ENCODE measurements at regions of chr5 and their contacts with region 1.

Region 1: DNA sequence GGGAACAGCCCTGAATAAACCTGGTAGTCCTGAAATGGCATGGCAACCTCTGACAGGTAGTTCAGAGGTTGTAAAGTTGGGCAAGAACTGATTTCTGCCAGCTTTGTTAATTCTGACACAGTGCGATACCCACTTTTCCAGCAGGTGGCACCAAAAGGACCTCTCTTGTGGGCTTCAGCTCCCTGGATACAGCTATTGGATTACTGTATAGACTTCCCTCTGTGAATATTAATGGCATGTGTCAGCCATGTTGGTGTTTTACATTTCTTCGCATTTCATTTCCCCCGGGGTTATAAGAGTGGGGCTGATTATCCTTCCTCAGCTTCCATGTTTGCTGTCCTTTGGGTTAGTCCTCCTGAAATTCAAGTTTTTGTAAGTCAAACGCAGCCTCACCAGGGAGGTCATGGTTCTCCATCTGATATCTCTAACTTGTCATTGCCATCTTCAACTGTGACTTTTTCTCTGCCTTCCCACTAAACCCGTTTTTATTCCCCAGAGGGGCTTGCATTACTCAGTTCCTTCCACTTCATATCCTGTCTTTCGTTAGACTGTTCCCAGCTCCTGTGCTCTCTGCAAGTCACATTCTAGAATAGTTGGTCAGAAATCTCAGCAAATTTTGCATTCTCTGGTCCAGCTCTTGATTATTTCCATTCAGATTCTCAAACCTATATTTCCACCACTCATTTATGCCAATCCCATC is 135.6 kb downstream of the LIFR start:
- DNase-seq: peak; percentile 73
- H3K4me3 ChIP-seq: peak overlapping the region in 1 of 3 experiments; percentile 32
- H3K27ac ChIP-seq: peak overlapping the region; percentile 39
- H3K4me1 ChIP-seq: peaks cover 11% of the 10 kb centered on the region
- H3K27me3 ChIP-seq: no peaks in the 10 kb centered on the region
- CTCF ChIP-seq: peak; percentile 74 to 81
- POLR2A ChIP-seq: no peak

Region 2: DNA sequence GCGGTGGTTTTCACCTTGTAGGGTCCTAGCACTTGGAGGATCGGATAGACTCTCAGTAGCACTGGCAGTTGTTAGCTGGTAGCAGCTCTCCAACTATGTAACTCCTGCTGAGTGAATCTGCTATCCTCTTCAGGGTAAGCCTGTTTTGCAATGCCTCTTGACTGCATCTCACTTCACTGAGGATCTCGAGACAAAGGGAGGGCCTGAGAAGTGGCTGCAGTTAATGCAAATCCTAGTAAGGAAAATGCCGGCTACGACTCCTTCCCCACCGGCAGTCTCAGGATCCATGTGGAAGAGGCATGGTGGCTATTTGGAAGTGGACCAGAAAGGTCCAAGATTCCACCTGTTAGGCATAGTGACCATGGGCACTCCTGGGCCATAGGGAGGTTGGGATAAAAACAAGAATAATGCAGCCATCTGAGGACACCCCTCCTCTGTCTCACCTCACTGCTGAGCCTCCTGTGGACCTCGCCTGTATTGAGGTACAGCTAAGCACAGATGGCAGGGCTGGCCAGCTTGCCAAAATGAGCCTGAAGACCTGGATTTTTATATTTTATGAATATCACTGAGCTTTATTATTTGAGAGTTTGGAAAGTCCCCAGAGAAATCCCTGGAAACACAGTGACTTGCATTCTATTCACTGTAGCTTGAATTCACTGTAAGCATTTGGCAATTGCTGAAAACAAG is 10.4 kb before region 1 on chr5:
- CTCF ChIA-PET with region 1: interaction called, 29 read pairs
- POLR2A ChIA-PET with region 1: no interaction called
- dilution Hi-C with region 1: no loop called
- intact Hi-C with region 1: no loop called
- DNase-seq: no peak
- H3K4me3 ChIP-seq: no peak overlapping the region
- H3K27ac ChIP-seq: no peak overlapping the region
- H3K4me1 ChIP-seq: no peaks in the 10 kb centered on the region
- H3K27me3 ChIP-seq: peaks cover 0 to 3% of the 10 kb centered on the region in 2 experiments
- CTCF ChIP-seq: no peak
- POLR2A ChIP-seq: no peak

Region 3: GRCh38 chr5:38463634-38464521 is 43.0 kb after region 1 on chr5:
- CTCF ChIA-PET with region 1: interaction called, 18 read pairs
- POLR2A ChIA-PET with region 1: no interaction called
- dilution Hi-C with region 1: no loop called
- intact Hi-C with region 1: loop called (anchors 1 kb)
- DNase-seq: peak; percentile 89
- H3K4me3 ChIP-seq: no peak overlapping the region
- H3K27ac ChIP-seq: peak overlapping the region; percentile 90
- H3K4me1 ChIP-seq: peaks cover 64% of the 10 kb centered on the region
- H3K27me3 ChIP-seq: no peaks in the 10 kb centered on the region
- CTCF ChIP-seq: no peak
- POLR2A ChIP-seq: peak; percentile 73

Region 4: DNA sequence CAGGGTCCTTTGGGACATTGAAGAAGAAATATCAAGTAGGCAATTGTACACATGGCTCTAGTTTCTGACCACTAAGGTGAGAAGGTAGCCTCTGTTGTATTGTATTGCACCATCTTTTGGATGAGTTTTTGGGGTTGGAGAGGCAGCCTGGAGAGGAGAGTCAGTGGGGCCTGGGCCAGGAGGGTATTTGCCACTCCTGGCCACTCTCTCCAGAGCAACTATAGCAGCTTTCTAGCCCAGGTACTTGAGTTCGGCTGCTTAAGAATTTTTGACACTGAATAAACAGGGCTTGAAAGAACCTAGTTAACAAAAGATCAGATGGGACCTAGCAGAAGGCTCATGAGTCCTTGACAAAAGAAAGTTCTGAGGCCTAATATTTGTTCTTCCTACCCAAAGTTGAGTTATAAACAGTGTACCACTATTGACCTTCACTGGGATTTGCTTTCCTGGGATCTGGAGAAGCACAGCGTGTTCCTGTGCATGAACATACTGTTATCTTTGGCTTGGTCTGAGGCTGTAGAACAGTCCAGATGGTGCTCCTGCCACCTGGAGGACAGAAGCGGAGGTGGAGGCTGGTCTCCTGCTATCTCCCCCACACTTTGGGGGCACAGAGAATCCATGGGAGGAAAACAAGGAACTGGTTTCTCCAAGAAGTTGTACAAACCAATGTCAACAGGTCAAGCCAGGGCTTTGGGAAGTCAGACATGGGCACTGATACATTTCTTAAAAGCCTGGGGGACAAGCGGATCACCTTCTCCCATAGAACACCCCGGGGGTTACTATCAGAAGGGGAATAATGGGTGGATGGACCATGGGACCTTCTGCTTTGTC is 246.0 kb after region 1 on chr5:
- CTCF ChIA-PET with region 1: interaction called, 20 read pairs
- POLR2A ChIA-PET with region 1: no interaction called
- dilution Hi-C with region 1: no loop called
- intact Hi-C with region 1: loop called (anchors 1 kb)
- DNase-seq: peak; percentile 67
- H3K4me3 ChIP-seq: no peak overlapping the region
- H3K27ac ChIP-seq: no peak overlapping the region
- H3K4me1 ChIP-seq: peaks cover 5% of the 10 kb centered on the region
- H3K27me3 ChIP-seq: no peaks in the 10 kb centered on the region
- CTCF ChIP-seq: peak; percentile 65 to 82
- POLR2A ChIP-seq: no peak

Region 5: DNA sequence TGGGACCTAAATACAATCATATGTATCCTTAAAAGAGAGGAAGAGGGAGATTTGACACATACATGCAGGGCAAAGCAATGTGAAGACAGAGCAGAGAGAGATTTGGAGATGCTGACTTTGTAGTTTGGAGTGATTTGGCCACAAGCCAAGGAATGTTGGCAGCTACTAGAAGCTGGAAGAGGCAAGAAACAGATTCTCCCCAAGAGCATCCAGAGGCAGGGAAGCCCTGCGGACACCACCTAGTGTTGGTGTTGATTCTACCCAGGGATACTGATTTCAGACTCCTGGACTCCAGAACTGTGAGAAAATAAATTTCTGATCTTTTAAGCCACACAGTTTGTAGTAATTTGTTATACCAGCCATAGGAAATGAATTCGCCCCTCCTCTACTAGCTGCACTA is 360.1 kb after region 1 on chr5:
- CTCF ChIA-PET with region 1: interaction called, 15 read pairs
- POLR2A ChIA-PET with region 1: no interaction called
- dilution Hi-C with region 1: no loop called
- intact Hi-C with region 1: no loop called
- DNase-seq: peak; percentile 62
- H3K4me3 ChIP-seq: no peak overlapping the region
- H3K27ac ChIP-seq: no peak overlapping the region
- H3K4me1 ChIP-seq: peaks cover 29% of the 10 kb centered on the region
- H3K27me3 ChIP-seq: peaks cover 0 to 8% of the 10 kb centered on the region in 2 experiments
- CTCF ChIP-seq: peak in 1 of 2 donors; percentile 10
- POLR2A ChIP-seq: no peak

Measured in endothelial cell of umbilical vein (primary cell).